Heart left ventricle (tissue), 16 donors: ENCODE measurements at regions of chr9 and their contacts with region 1.

Region 1: DNA sequence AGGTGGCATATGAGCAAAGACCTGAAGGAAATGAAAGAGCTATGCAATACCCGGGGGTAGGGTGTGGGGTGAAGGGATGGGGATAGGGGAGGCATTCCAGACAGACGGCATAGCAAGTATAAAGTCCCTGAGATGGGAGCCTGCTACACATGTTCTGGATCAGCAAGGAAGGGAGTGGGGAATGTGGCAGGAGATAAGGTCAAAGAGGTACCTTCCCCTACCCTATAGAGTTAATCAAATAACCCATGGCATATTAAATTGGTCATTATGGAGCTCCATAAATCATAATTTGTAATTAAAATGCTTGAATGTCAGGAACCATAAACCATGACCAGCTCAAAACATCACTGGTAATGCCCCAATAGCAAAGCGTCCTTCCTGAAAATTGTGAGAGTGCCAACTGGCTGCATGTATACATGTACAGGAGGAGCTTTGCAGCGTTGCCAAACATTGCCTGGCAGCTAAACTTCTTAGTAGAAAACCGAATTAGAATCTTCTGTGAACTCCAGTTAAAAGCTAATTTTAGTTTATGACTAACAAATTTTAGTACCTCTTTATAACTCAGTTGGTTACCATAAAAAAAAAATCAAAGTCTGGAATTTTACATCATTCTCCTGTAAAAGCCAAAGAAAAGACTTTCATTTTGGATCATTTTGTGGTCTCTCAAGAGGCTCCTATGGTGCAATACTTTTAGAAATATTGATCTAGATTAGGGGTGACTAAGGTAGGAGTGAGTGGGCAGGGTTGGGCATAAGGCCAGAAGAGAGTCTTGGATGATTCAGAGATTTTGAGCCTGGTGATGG is 4.7 kb downstream of the DNAI1 start:
- DNase-seq: no peak
- ATAC-seq: no peak
- H3K4me3 ChIP-seq: no peak overlapping the region
- H3K27ac ChIP-seq: no peak overlapping the region
- H3K4me1 ChIP-seq: peaks cover 0 to 14% (median 2%) of the 10 kb centered on the region in 12 donors
- H3K27me3 ChIP-seq: peaks cover 0 to 3% (median 0%) of the 10 kb centered on the region in 9 donors
- CTCF ChIP-seq: no peak
- POLR2A ChIP-seq: no peak

Region 2: GRCh38 chr9:34310205-34310604 is 153.1 kb before region 1 on chr9:
- intact Hi-C with region 1: no loop called
- DNase-seq: no peak
- ATAC-seq: no peak
- H3K4me3 ChIP-seq: no peak overlapping the region
- H3K27ac ChIP-seq: no peak overlapping the region
- H3K4me1 ChIP-seq: no peaks in the 10 kb centered on the region
- H3K27me3 ChIP-seq: no peaks in the 10 kb centered on the region
- CTCF ChIP-seq: no peak
- POLR2A ChIP-seq: no peak

Region 3: GRCh38 chr9:34493972-34494535 is 30.8 kb after region 1 on chr9:
- intact Hi-C with region 1: loop called in 1 of 10 experiments (anchors 5 kb)
- DNase-seq: peak in 4 of 5 donors; percentile 56 to 68 (median 62)
- ATAC-seq: peak in 3 of 4 donors; percentile 57 to 80 (median 64)
- H3K4me3 ChIP-seq: no peak overlapping the region
- H3K27ac ChIP-seq: no peak overlapping the region
- H3K4me1 ChIP-seq: no peaks in the 10 kb centered on the region
- H3K27me3 ChIP-seq: peaks cover 0 to under 1% (median 0%) of the 10 kb centered on the region in 9 donors
- CTCF ChIP-seq: no peak
- POLR2A ChIP-seq: no peak